Posterior cingulate gyrus (tissue), 11 donors: ENCODE measurements at regions of chr6 and their contacts with region 1.

Region 1: GRCh38 chr6:2622671-2623070 is 128.1 kb downstream of the MYLK4 start:
- DNase-seq: no peak

Region 2: DNA sequence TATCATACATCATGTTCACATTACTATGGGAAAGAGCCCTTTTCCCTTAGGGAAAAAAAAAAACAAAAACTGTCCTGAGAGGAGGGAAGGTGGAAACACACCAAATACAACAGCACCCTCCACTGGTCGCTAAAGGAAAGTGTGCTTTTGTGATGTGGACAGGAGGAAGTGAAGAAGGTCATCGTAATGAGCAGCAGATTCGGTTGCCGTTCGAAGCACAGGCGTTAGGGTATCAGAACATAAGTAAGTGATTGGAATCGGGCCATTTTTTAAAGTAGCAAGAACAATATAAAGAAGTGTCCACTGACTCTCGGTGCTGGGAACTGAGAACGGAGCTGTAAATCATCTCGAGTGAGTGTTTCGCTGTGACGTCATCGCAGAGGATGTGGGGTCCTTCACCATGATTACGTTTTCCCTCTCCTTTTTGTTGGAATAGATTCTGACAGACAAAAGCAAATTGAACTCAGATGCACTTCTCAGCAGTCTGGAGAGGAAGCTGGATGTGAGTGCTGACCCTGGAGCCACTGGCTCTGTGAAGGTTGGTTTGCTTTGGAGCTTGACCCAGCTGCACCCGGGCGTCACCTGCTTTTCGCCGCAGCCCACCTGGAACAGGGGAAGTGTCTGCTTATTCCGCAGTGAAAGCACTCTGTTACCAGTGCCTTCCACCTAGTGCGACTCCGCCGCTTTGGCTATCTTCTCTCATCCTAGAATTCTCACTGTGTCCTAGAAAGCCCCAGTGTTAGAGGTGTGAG is 173.7 kb before region 1 on chr6:
- intact Hi-C with region 1: loop called (anchors 10 kb)
- DNase-seq: peak in 1 of 10 donors; percentile 18

Region 3: GRCh38 chr6:2791124-2791974 is 168.7 kb after region 1 on chr6:
- intact Hi-C with region 1: no loop called
- DNase-seq: peak in 5 of 10 donors; percentile 62 to 93 (median 64)

Region 4: GRCh38 chr6:2862712-2863181 is 240.1 kb after region 1 on chr6:
- intact Hi-C with region 1: no loop called
- DNase-seq: no peak

Region 5: DNA sequence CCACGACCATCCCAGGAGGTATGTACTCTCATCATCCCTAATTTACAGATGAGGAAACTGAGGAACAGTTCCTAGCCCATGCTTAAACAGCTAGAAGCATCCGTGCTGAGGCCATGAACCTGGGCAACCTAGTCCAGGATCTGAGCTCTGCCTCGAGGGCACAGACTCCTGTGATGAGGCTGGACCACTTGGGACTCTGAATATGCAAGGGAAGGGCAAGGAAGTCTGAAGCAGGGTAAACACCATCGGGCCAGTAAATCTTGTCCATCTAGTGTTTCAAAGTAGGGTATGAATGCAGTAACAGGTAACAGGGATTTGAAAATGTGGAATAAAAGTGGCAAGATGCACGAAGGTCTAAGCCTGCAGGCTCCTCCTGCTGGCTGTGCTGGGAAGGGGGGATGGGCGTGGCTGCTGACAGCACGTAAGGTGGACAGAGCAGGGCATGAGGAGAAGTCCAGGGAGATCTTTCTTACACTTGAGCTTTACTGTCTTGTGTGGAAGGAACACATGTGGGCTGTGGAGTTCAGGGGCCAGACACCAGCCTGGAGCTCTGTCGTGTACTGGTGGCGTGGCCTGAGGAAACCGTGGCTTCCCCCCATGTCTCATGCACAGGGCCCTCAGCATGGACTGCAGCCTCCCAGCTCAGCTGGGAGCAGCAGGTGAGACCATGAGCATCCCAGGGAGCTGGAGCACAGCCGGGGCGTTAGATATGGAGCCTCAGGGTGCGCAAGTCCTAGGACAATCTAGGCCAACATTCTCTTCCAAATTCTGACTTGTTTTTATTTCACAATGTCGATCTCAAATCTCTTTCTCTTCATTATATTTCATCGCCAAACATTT is 749.6 kb after region 1 on chr6:
- intact Hi-C with region 1: no loop called
- DNase-seq: peak in 2 of 10 donors; percentile 16 to 81

Region 6: DNA sequence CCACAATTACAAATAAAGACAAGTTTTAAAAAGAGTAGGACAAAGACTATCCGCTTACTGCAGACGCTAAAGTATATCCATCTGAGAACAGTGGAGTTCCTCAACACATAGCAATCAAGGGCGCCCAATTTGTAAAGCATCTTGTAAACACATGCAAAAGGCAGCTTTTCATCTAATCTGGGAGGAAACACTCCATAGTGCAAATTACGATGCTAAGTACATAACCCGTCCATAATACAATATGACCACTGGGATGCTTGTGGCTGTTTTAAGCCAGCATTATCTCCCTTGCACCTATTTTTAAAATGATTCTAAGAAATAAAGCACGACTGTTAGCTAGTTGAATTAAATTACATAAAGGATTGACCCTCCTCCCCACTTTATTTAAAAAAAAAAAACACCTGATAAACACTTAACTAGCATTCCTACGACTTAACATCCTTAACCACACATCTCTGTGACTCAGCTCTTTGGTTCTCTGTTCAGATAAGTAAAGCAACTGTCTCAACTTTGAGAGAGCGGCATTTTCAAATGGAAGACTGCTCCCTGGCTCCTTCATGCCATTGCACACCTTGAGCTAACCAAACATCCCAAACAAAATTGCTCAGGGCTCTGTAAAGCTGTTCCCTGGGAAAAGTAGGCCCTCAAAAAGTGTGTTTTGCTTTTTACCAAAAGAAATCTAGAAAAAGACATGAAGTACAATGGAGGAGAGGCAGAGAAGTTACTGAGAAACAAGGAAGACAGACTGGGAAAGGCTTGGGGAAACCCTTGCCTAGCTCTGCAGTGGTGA is 820.0 kb after region 1 on chr6:
- intact Hi-C with region 1: no loop called
- DNase-seq: no peak